Tibial artery (tissue), 4 donors: ENCODE measurements at regions of chr2 and their contacts with region 1.

Region 1: DNA sequence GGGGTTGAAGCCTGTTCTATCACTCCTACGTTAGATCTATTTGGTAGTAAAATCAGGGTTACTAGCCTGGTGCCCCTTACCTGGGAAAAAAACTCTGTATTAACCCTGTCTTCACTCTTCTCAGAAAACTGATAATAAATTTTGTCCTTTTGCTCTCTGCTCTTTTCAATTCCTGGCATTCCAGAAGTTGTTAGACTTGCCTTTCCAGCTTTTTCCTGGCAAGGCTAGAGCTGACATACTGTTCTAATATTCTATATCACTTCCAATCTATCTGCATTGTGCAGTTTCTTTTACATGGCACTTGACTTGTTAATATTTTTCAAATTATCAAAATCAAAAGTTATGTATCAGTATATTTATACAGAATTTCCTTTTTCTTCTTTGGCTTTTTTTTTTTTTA is 162.2 kb downstream of the FIGN start:
- DNase-seq: no peak
- H3K4me3 ChIP-seq: no peak overlapping the region
- H3K27ac ChIP-seq: no peak overlapping the region
- H3K4me1 ChIP-seq: no peaks in the 10 kb centered on the region
- H3K27me3 ChIP-seq: no peaks in the 10 kb centered on the region
- CTCF ChIP-seq: no peak

Region 2: GRCh38 chr2:163626639-163627109 is 53.0 kb after region 1 on chr2:
- intact Hi-C with region 1: no loop called
- DNase-seq: no peak
- H3K4me3 ChIP-seq: no peak overlapping the region
- H3K27ac ChIP-seq: no peak overlapping the region
- H3K4me1 ChIP-seq: peaks cover 0 to 28% (median 5%) of the 10 kb centered on the region in 4 donors
- H3K27me3 ChIP-seq: no peaks in the 10 kb centered on the region
- CTCF ChIP-seq: no peak

Region 3: DNA sequence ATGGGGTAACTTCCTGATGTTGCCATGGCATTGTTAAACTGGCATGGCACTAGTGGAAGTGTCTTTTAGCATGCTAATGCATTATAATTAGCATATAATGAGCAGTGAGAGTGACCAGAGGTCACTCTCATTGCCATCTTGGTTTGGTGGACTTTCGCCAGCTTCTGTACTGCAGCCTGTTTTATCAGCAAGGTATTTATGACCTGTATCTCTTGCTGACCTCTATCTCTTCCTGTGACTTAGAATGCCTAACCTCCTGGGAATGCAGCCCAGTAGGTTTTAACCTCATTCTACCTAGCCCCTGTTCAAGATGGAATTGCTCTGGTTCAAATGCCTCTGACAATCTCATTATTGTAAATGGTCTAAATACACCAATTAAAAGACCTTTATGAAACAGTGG is 276.3 kb after region 1 on chr2:
- intact Hi-C with region 1: loop called (anchors 10 kb)
- DNase-seq: no peak
- H3K4me3 ChIP-seq: no peak overlapping the region
- H3K27ac ChIP-seq: no peak overlapping the region
- H3K4me1 ChIP-seq: no peaks in the 10 kb centered on the region
- H3K27me3 ChIP-seq: no peaks in the 10 kb centered on the region
- CTCF ChIP-seq: no peak